ENCODE measurements at regions of chr7 and their contacts with region 1.

Region 1: DNA sequence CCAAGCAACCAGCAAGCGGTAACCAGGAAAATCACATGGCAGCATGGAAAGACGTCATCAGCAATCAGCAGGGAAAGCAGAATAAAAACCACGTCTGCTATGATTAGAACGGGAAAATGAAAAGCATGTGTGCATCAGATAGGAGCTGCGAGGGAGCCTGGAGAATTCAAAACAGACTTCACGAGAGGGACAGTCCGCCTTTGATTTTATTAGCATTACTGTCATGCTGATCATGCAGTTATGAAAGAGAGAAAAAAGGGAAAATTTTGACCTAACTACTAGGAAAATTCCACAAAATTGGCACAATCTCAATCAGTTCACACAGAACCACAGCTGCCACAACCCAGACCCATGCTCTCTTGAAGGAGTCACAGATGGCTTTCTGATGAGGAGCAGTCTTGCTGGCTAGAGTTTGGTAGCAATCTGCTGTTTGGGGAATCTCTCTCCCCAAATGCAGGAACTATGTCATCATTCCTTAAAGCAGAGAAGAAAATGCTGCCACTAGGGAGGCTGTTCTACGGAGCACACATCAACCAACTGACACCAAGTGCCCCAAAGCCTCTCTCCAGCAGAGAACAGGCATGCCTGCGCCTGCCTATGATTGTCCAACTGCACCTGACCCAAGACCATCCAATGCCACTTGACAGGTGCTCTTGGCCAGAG is 295.9 kb downstream of the TNS3 start:
- DNase-seq: no peak
- ATAC-seq: no peak
- H3K4me3 ChIP-seq: no peak overlapping the region
- H3K27ac ChIP-seq: no peak overlapping the region
- H3K4me1 ChIP-seq: no peaks in the 10 kb centered on the region
- H3K27me3 ChIP-seq: peaks cover 0 to 24% of the 10 kb centered on the region in 2 experiments; a peak in 3 of 5 replicates
- CTCF ChIP-seq: no peak
- EP300 ChIP-seq: no peak
- POLR2A ChIP-seq: no peak
- RAD21 ChIP-seq: no peak

Region 2: DNA sequence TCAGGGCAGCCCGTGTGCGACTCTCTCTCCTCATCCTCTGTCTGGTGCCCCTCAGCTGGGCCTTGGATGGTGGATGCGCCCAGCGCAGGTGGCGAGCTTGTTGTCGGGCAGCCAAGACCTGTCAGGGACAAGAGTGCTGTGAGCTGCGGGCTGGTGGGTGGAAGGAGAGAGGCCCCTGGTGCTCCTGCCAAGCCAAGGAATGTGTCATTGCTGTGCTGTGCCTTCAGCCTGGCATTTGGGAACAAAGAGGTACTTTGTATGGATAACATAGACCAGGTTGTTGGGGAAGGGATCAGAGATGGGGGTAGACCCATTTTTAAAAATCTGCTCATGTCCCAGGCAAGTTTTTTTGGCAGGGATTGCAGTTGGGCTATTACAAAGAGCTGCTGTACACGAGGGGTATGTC is 541.4 kb after region 1 on chr7:
- CTCF ChIA-PET with region 1: no interaction called
- POLR2A ChIA-PET with region 1: no interaction called
- in situ Hi-C with region 1: loop called (anchors 10 kb)
- intact Hi-C with region 1: no loop called
- DNase-seq: no peak
- ATAC-seq: no peak
- H3K4me3 ChIP-seq: no peak overlapping the region
- H3K27ac ChIP-seq: no peak overlapping the region
- H3K4me1 ChIP-seq: no peaks in the 10 kb centered on the region
- H3K27me3 ChIP-seq: peaks cover 0 to 19% of the 10 kb centered on the region in 2 experiments; a peak in 2 of 5 replicates
- CTCF ChIP-seq: no peak
- EP300 ChIP-seq: no peak
- POLR2A ChIP-seq: no peak
- RAD21 ChIP-seq: no peak